Common myeloid progenitor, CD34-positive (primary cell): ENCODE measurements at regions of chr1 and their contacts with region 1.

Region 1: GRCh38 chr1:100358210-100358609 is 5.9 kb downstream of the CDC14A start:
- DNase-seq: peak; percentile 43 to 66 (median 63)
- H3K4me3 ChIP-seq: no peak overlapping the region
- H3K27ac ChIP-seq: no peak overlapping the region
- H3K4me1 ChIP-seq: peaks cover 35 to 69% (median 46%) of the 10 kb centered on the region in 4 experiments
- H3K27me3 ChIP-seq: no peaks in the 10 kb centered on the region

Region 2: GRCh38 chr1:100213141-100213540 is 145.1 kb before region 1 on chr1:
- CTCF ChIA-PET with region 1: no interaction called
- POLR2A ChIA-PET with region 1: no interaction called
- DNase-seq: no peak
- H3K4me3 ChIP-seq: no peak overlapping the region
- H3K27ac ChIP-seq: no peak overlapping the region
- H3K4me1 ChIP-seq: no peaks in the 10 kb centered on the region
- H3K27me3 ChIP-seq: no peaks in the 10 kb centered on the region

Region 3: DNA sequence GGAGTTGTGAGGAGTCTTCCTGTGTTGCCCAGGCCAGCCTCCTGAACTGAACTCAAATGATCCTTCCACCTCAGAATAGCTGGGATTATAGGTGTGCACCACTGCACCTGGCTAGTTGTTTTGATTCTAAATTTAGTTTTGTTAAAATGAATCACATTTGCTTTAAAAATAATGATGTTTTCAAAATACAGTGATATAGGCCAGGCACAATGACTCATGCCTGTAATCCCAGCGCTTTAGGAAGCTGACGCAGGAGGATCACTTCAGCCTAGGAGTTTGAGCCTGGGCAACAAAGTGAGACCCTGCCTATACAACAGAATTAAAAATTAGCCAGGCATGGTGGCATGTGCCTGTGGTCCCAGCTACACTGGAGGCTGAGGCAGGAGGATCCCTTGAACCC is 67.9 kb before region 1 on chr1:
- CTCF ChIA-PET with region 1: interaction called, 15 read pairs
- POLR2A ChIA-PET with region 1: no interaction called
- DNase-seq: no peak
- H3K4me3 ChIP-seq: no peak overlapping the region
- H3K27ac ChIP-seq: peak overlapping the region in 1 of 2 experiments; percentile 11
- H3K4me1 ChIP-seq: peaks cover 0 to 16% (median 6%) of the 10 kb centered on the region in 4 experiments
- H3K27me3 ChIP-seq: no peaks in the 10 kb centered on the region

Region 4: DNA sequence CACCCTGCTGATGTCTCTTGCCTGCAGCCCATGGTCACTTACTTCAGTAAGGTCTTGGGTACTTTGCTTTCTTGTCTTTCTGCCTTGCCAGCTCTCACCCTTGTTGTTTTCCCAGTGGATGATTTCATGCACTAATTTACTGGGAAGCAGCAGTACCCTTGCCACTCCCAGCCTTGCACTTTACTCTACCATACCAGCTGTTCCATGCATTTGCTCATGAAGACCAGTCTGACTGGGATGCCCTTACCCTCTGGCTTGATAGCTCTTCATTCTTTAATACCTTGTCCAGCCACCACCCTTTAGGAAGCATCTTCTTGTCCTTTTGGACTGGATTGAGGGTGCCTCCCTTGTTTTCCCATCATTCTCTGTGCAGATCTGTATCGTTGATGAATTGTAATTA is 22.4 kb after region 1 on chr1:
- CTCF ChIA-PET with region 1: interaction called, 14 read pairs
- POLR2A ChIA-PET with region 1: no interaction called
- DNase-seq: no peak
- H3K4me3 ChIP-seq: no peak overlapping the region
- H3K27ac ChIP-seq: no peak overlapping the region
- H3K4me1 ChIP-seq: peaks cover 0 to 7% (median 0%) of the 10 kb centered on the region in 4 experiments
- H3K27me3 ChIP-seq: no peaks in the 10 kb centered on the region